Activated CD4-positive, alpha-beta T cell treated with anti-CD3 and anti-CD28 coated beads for 36 hours (primary cell): ENCODE measurements at regions of chr1 and their contacts with region 1.

Region 1: DNA sequence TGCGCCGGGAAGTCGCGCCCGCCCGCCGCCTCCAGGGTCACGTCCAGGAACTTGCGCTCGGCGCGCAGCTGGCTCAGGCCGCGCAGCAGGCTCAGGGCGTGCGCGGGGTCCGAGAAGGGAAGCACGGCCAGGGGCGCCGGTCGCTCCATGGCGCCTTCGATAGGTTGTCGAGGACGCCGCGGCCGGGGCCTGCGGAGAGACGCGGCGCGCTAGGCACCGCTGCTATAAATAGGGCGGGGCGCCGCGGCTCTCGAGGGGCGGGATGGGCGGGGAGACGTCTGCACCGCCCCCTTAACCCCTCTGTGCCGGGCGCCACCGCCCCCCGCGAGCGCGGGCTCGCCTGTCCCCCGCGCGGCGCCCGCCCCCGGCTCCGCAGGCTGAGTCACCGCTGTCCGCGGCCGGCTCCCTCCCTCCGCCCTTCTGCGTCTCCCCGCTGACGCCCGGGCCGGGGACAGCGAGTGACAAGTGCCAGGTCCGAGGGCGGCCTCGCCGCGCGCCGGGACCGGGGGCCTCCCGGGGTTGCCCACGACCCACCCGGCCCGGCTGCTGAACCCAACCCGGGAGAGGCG is at the start of gene KLHL21:
- DNase-seq: peak; percentile 93
- ATAC-seq: peak; percentile 45
- H3K4me3 Mint-ChIP-seq: peak within 1 kb of the TSS; percentile 97
- H3K27ac Mint-ChIP-seq: peak within 1 kb of the TSS; percentile 95
- H3K4me1 Mint-ChIP-seq: peaks cover 30% of the 10 kb centered on the region
- H3K27me3 Mint-ChIP-seq: no peaks in the 10 kb centered on the region
- total RNA-seq, gene KLHL21: 12.4 to 15.7 TPM

Region 2: GRCh38 chr1:5908461-5909370 is 694.0 kb before region 1 on chr1:
- CTCF ChIA-PET with region 1: no interaction called
- POLR2A ChIA-PET with region 1: no interaction called
- intact Hi-C with region 1: no loop called
- DNase-seq: no peak
- ATAC-seq: no peak
- H3K4me3 Mint-ChIP-seq: no peak overlapping the region
- H3K27ac Mint-ChIP-seq: no peak overlapping the region
- H3K4me1 Mint-ChIP-seq: no peaks in the 10 kb centered on the region
- H3K27me3 Mint-ChIP-seq: no peaks in the 10 kb centered on the region

Region 3: DNA sequence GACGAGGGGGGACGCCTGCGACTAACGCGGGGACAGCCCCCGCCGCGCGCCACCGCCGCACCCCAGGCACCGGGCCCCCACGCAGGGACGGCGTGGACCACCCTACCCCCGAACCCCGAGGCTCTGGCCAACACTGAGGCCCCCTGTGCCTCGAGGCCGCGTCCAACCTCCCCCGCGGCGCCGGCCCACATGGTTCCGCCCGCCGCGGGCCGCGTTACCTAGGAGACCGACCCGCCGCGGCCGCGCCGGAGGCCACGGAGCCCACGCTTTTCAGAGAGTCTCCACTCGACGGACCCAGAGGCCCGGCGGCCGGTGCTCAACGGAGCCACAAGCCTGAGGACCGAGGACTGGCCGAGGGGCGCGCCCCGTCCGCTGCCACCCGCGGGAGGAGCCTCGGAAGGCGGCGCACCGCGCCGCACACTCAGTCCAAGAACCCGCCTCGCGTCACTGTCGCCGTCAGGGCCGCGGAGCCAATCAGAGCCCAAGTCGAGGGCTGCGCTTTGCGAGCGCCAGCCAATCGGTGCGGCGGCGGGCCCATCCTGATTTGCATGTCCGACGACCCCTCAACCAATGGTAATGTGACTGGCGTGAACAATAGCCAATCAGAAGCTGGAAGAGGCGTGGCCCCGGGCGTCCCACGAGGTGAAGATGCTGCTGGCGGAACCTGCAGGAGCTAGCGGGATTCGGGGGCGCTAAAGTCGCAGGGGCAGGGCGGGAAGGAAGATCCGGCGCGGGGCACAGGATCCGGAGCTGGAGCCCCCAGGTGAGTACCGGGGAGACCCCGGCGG is 610.5 kb before region 1 on chr1 and contains the start of gene NPHP4:
- CTCF ChIA-PET with region 1: no interaction called
- POLR2A ChIA-PET with region 1: no interaction called
- intact Hi-C with region 1: loop called in 1 of 2 experiments (anchors 1 kb)
- DNase-seq: peak; percentile 100
- ATAC-seq: peak; percentile 93
- H3K4me3 Mint-ChIP-seq: peak within 1 kb of the TSS; percentile 97
- H3K27ac Mint-ChIP-seq: peak within 1 kb of the TSS; percentile 96
- H3K4me1 Mint-ChIP-seq: peaks cover 25% of the 10 kb centered on the region
- H3K27me3 Mint-ChIP-seq: no peaks in the 10 kb centered on the region
- total RNA-seq, gene NPHP4: 12.9 to 14.1 TPM

Region 4: DNA sequence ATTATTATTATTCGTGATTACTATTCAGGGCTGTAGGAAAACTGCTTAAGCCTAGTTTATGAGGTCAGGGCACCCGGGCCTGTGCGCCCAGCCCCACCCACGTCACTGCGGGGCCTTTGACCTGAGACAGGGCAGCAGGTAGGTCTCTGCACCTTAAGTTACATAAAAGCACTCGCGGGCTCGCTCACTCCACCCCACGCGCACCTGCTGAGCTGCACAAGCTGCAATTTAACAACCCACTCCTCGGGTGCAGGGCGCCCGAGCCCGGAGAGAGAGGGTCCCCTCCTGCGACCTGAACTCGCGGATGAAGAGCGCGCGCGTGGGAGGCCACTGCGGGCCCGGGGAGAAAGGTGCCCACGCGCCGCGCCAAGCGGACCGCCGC is 367.5 kb before region 1 on chr1:
- CTCF ChIA-PET with region 1: no interaction called
- POLR2A ChIA-PET with region 1: no interaction called
- intact Hi-C with region 1: loop called in 1 of 2 experiments (anchors 5 kb)
- DNase-seq: no peak
- ATAC-seq: peak; percentile 7
- H3K4me3 Mint-ChIP-seq: peak overlapping the region; percentile 88
- H3K27ac Mint-ChIP-seq: peak overlapping the region; percentile 78
- H3K4me1 Mint-ChIP-seq: peaks cover 12% of the 10 kb centered on the region
- H3K27me3 Mint-ChIP-seq: peaks cover 11% of the 10 kb centered on the region

Region 5: DNA sequence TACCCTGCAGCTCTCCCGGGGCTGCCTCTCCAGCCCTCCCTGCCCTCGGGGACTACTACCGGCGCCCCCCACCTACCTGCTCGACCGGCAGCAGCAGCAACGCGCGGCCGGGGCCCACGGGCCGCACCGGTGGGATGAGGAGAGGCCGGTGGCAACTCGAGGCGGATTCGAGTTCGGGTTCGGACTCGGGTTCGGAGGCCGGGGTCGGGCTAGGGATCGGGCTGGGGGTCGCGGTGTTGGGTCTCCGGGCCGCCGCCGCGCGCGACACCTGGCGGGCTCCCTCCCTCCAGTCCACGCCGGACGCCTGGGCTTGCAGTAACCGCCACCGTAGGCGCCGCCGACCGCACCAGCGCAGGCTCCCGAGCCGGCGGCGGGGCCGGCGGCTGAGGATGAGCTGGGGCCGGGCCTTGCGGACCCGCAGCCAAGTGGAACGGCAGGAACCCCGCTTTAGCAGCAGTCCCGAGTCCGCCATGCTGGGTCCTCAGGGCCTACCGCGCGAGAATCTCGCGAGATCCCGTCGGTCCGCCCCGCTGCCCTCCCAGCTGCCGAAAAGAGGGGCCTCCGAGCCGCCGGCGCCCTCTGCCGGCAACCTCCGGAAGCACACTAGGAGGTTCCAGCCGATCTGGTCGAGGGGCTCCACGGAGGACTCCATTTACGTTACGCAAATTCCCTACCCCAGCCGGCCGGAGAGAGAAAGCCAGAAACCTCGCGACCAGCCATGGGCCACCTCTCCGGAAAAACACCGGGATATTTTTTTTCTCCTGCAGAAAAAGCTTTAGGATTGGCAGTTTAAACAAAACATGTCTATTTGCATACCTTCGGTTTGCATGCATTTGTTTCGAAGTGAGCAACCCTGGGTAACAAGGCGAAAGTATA is 48.5 kb before region 1 on chr1 and contains the start of gene NOL9:
- CTCF ChIA-PET with region 1: interaction called, 3 read pairs
- POLR2A ChIA-PET with region 1: no interaction called
- intact Hi-C with region 1: loop called (anchors 1 to 10 kb)
- DNase-seq: peak; percentile 97
- ATAC-seq: peak; percentile 98
- H3K4me3 Mint-ChIP-seq: peak within 1 kb of the TSS; percentile 82
- H3K27ac Mint-ChIP-seq: peak within 1 kb of the TSS; percentile 55
- H3K4me1 Mint-ChIP-seq: peaks cover 19% of the 10 kb centered on the region
- H3K27me3 Mint-ChIP-seq: no peaks in the 10 kb centered on the region
- total RNA-seq, gene NOL9: 37.4 to 44.7 TPM

Region 6: DNA sequence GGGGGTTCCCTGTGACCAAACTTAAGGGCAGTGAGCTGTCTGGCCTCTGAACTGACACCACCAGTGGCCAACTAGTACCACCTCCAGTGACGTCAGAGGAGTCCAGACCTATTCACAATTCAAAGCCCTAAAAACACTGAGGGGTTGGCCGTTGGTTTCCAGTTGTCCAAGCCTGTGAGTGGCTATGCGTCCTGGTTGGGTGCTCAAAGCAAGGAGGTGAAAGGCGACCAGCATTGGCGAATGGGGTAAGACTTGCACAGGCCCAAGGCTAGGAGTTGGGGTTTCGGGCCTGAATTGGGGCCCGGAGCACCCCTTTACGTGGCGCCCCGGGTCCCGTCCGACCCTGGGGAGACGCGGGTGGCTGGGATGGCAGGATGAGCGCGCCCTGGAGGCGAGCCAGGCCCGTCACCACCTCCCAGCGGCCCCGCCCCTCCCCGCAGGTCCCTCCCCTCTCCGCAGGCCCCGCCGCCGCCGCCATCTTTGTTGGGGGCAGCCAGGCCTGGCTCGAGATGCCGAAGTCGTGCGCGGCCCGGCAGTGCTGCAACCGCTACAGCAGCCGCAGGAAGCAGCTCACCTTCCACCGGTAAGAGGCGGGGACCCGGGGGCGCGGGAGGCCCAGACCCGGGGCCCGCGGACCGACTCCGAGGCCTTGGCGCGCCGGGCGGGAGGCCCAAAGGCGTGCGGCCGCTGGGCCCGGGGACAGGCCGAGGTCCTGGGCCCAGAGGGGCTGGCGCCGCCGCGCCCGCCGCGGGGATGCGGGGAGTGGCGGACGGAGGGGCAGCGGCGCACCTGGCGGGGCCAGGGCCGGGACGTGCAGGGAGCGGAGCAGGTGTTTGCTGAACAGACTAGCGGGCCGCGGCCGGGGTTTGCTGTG is 22.2 kb after region 1 on chr1 and contains the start of gene THAP3:
- CTCF ChIA-PET with region 1: interaction called, 9 read pairs
- POLR2A ChIA-PET with region 1: interaction called, 6 read pairs
- intact Hi-C with region 1: loop called (anchors 1 to 2 kb)
- DNase-seq: peak; percentile 96
- ATAC-seq: peak; percentile 98
- H3K4me3 Mint-ChIP-seq: peak within 1 kb of the TSS; percentile 85
- H3K27ac Mint-ChIP-seq: peak within 1 kb of the TSS; percentile 78
- H3K4me1 Mint-ChIP-seq: peaks cover 28% of the 10 kb centered on the region
- H3K27me3 Mint-ChIP-seq: no peaks in the 10 kb centered on the region
- total RNA-seq, gene THAP3: 19.4 to 22.1 TPM

Region 7: DNA sequence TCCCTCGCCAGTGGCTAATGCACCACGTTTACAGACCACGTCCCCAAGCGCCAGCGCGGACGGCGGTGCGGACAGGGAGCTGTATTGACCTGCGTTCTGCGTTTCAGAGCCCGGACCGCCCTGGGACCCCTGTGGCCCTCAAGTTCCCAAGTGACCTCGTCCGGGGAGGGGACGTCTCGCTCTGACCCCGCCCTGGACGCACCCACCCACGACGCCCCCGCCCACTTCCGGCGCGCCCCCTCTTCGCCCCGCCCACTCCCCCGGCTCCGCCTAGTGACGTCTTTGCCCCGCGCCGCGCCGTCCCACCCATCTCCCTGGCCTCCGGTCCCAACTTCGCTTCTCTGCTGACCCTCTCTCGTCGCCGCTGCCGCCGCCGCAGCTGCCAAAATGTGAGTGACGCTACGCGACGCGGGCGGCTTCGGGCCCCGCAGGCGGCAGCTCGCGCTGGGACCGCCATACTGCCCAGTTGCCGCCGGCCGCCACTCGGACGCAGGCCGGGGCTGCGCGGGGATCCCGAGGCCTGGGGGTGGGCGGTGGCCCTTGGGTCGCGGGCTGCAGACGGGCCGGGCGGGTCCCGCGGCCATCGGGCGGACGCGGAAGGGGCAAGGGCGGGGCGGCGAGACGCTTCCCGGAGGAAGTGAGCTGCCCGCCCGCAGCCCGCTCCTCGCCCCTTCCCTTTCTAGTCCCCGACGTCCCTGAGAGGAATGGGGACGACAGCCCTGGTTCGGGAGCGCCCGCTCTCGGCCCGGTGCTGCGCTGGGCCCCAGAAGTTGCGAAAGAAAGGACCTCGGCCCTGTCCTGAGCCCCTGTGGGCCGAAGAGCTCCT is 1168.5 kb after region 1 on chr1 and contains the start of gene VAMP3:
- CTCF ChIA-PET with region 1: no interaction called
- POLR2A ChIA-PET with region 1: no interaction called
- intact Hi-C with region 1: loop called in 1 of 2 experiments (anchors 5 kb)
- DNase-seq: peak; percentile 94
- ATAC-seq: peak; percentile 90
- H3K4me3 Mint-ChIP-seq: peak within 1 kb of the TSS; percentile 80
- H3K27ac Mint-ChIP-seq: peak within 1 kb of the TSS; percentile 72
- H3K4me1 Mint-ChIP-seq: peaks cover 21% of the 10 kb centered on the region
- H3K27me3 Mint-ChIP-seq: peaks cover 6% of the 10 kb centered on the region
- total RNA-seq, gene VAMP3: 16.8 to 17.4 TPM